ENCODE measurements at regions of chr17 and their contacts with region 1.

Region 1: DNA sequence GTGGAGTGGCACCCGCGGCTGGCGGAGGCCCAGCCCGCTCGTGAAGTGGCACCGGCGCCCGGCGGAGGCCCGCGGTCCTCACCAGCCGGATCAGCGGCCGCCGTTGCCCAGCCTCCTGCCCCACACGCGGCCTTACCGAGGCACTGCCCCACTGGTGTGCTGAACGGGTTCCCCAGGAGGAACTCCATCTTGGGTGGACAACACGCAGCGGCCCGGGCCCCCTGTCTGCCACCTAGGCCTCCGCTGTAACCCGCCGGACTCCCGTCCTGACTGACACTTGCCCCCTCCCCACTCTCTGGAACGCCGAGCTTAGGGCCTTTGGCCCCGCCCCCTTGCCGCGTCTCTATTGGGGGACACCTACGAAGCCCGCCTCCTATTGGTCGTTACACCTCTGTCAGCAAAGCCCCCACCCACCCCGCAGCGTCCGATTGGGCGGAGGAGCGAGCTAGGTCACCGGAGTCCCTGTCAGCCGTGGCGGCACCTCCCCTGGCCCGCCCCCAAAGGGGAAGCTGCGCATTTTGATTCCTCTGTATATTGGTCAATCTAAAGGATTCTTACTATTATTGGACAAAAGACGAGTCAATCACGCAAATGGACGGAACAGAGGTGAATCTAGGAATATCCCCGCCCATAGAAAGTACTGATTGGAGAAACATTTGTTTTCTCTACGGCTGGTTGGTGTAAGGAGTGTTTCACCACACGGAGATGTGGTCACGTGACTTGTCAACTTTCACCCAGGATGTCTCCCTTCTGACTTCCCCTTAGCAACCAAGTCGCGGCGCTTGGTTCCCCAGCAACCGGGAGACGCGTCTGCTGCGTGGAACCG is at the starts of genes DRC3 and TOM1L2:
- DNase-seq: peak; percentile 100
- ATAC-seq: peak; percentile 96 to 98 (median 98)
- H3K4me3 ChIP-seq: peak within 1 kb of the TSS; percentile 73 to 97 (median 94)
- H3K27ac ChIP-seq: peak within 1 kb of the TSS; percentile 79 to 96 (median 94)
- H3K4me1 ChIP-seq: peaks cover under 1 to 54% (median 29%) of the 10 kb centered on the region in 9 donors
- H3K27me3 ChIP-seq: no peaks in the 10 kb centered on the region
- CTCF ChIP-seq: peak in 7 of 9 donors; percentile 15 to 51 (median 37)
- total RNA-seq, gene DRC3: 1.1 to 2.6 (median 2.0) TPM
- total RNA-seq, gene TOM1L2: 174 to 331 (median 290) TPM

Region 2: GRCh38 chr17:17621254-17621653 is 351.1 kb before region 1 on chr17:
- intact Hi-C with region 1: no loop called
- DNase-seq: no peak
- ATAC-seq: no peak
- H3K4me3 ChIP-seq: no peak overlapping the region
- H3K27ac ChIP-seq: no peak overlapping the region
- H3K4me1 ChIP-seq: no peaks in the 10 kb centered on the region
- H3K27me3 ChIP-seq: no peaks in the 10 kb centered on the region
- CTCF ChIP-seq: no peak

Region 3: GRCh38 chr17:17877529-17878358 is 94.6 kb before region 1 on chr17:
- intact Hi-C with region 1: loop called in 2 of 10 experiments (anchors 5 to 10 kb)
- DNase-seq: peak; percentile 81 to 88
- ATAC-seq: peak; percentile 79 to 90 (median 85)
- H3K4me3 ChIP-seq: peak overlapping the region in 3 of 10 donors; percentile 3 to 10 (median 5)
- H3K27ac ChIP-seq: peak overlapping the region; percentile 82 to 97 (median 90)
- H3K4me1 ChIP-seq: peaks cover 27 to 79% (median 54%) of the 10 kb centered on the region in 9 donors
- H3K27me3 ChIP-seq: no peaks in the 10 kb centered on the region
- CTCF ChIP-seq: peak in 4 of 9 donors; percentile 6 to 45 (median 28)

Region 4: DNA sequence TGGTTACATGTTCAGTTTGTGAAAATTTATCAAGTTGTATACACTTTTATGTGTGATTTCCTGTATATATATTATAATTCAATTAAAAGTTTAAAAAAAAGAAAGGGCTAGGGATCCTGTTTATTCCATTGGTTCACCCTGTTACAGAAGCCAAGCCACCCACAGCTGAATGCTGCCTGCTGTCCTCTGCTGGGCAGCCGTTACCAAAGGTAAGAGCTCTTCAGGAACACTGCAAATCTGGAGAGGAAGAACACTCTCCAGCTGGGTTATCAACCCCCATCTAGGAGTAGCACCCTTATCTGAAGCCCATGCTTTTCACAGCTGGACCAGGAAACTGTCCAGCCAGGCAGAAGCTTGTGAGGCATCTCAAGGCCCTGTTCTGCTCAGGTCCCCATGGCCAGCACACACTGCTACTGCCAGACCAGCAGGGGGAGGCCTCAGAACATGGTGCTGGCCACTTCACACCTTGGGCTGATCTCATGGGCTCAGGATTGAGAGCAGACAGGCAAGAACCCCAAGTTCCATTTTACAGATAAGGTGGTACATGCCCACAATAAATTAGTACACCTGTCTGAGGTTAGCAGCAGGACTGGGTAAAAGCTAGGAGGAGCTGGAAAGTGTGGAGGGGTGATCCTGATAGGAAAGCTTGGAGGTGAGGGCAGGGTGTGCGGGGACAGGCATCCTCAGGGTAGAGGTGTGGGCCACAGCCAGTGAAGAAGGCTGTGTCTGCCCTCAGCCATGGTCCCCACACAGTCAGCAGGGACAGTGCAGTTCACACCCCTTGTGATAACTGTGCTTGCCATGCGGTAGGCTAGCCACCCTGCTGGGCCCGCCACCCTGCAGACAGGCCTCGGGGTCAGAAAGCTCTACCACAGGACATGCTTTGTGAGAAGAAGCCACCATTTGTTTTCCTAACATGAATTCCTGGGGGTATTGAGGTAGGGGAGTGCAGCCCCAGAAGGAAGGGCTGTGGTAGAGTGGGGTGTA is 81.3 kb before region 1 on chr17:
- intact Hi-C with region 1: loop called in 2 of 10 experiments (anchors 10 kb)
- DNase-seq: peak; percentile 38 to 42
- ATAC-seq: peak; percentile 49 to 76 (median 66)
- H3K4me3 ChIP-seq: no peak overlapping the region
- H3K27ac ChIP-seq: peak overlapping the region in 1 of 10 donors; percentile 12
- H3K4me1 ChIP-seq: peaks cover 4 to 43% (median 27%) of the 10 kb centered on the region in 9 donors
- H3K27me3 ChIP-seq: no peaks in the 10 kb centered on the region
- CTCF ChIP-seq: peak; percentile 36 to 75 (median 66)

Region 5: GRCh38 chr17:17928398-17929287 is 43.7 kb before region 1 on chr17:
- intact Hi-C with region 1: loop called in 5 of 10 experiments (anchors 5 kb)
- DNase-seq: no peak
- ATAC-seq: peak; percentile 40 to 68 (median 56)
- H3K4me3 ChIP-seq: no peak overlapping the region
- H3K27ac ChIP-seq: peak overlapping the region in 8 of 10 donors; percentile 43 to 89 (median 66)
- H3K4me1 ChIP-seq: peaks cover 10 to 85% (median 51%) of the 10 kb centered on the region in 9 donors
- H3K27me3 ChIP-seq: no peaks in the 10 kb centered on the region
- CTCF ChIP-seq: no peak

Region 6: DNA sequence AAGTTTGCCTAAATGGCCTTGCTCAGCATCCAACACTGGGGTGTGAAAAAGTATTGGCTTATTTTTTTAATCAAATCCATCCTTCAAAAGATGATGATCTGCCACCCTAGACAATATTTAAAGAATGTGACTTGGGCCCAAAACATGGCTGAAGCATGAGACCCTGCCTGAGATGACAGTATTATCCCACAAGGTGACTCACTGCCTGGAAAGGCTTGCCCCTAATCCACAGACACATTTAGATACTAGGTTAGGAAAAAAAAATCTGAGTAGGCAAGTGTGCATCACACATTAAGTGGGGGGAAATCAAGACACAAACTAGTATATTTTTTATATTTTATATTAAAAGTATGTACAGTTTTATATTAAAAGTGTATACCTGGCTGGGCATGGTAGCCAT is 38.6 kb before region 1 on chr17:
- intact Hi-C with region 1: loop called in 2 of 10 experiments (anchors 5 kb)
- DNase-seq: no peak
- ATAC-seq: no peak
- H3K4me3 ChIP-seq: no peak overlapping the region
- H3K27ac ChIP-seq: peak overlapping the region in 1 of 10 donors; percentile 7
- H3K4me1 ChIP-seq: peaks cover 22 to 97% (median 68%) of the 10 kb centered on the region in 9 donors
- H3K27me3 ChIP-seq: no peaks in the 10 kb centered on the region
- CTCF ChIP-seq: no peak

Region 7: GRCh38 chr17:18025945-18026776 is 53.8 kb after region 1 on chr17:
- intact Hi-C with region 1: loop called in 3 of 10 experiments (anchors 5 to 10 kb)
- DNase-seq: peak; percentile 41 to 60
- ATAC-seq: peak in 6 of 8 donors; percentile 68 to 75 (median 71)
- H3K4me3 ChIP-seq: no peak overlapping the region
- H3K27ac ChIP-seq: peak overlapping the region in 5 of 10 donors; percentile 13 to 88 (median 77)
- H3K4me1 ChIP-seq: peaks cover 0 to 37% (median 28%) of the 10 kb centered on the region in 9 donors
- H3K27me3 ChIP-seq: no peaks in the 10 kb centered on the region
- CTCF ChIP-seq: no peak

Region 8: DNA sequence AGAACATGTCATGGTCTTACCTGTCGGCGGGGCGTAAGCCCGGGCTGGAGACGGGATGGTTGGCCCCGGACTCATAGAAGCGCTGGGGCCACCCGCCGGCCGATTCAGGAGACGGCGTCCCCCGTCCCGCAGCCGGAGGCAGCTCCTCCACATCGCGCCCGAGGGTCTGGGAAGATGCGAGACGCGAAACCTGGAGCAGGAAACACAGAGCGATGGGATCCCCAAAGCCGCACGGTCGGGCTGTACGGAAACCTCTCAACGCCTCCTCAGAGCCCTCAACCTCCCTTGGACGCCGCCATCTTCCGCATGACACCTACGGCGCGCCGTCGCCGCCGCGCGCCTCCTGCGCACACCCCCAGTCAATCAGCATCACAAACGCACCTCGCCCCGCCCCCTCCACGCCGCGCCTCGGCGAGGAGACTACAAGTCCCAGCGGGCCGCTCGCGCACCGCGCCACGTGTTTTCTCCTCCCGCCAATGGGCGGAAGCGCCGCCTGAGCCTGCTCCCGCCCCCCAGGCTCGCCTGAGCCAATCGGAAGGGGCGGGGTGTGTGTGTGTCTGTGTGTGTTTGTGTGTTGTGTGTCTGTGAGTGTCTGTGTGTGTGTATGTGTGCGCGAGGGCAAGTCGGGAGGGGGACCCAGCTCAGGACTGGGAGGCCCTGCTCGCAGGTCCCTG is 66.7 kb after region 1 on chr17 and contains the starts of genes ATPAF2 and GID4:
- intact Hi-C with region 1: loop called in 3 of 10 experiments (anchors 5 to 10 kb)
- DNase-seq: peak; percentile 99 to 100
- ATAC-seq: peak; percentile 96 to 99 (median 98)
- H3K4me3 ChIP-seq: peak within 1 kb of the TSS; percentile 65 to 98 (median 86)
- H3K27ac ChIP-seq: peak within 1 kb of the TSS; percentile 12 to 89 (median 85)
- H3K4me1 ChIP-seq: peaks cover 9 to 60% (median 50%) of the 10 kb centered on the region in 9 donors
- H3K27me3 ChIP-seq: no peaks in the 10 kb centered on the region
- CTCF ChIP-seq: peak in 3 of 9 donors; percentile 10 to 28 (median 22)
- total RNA-seq, gene ATPAF2: 32.6 to 43.5 (median 37.4) TPM
- total RNA-seq, gene GID4: 14.6 to 23.7 (median 17.3) TPM